Activated naive CD4-positive, alpha-beta T cell treated with anti-CD3 and anti-CD28 coated beads for 36 hours (primary cell): ENCODE measurements at regions of chr2 and their contacts with region 1.

Region 1: DNA sequence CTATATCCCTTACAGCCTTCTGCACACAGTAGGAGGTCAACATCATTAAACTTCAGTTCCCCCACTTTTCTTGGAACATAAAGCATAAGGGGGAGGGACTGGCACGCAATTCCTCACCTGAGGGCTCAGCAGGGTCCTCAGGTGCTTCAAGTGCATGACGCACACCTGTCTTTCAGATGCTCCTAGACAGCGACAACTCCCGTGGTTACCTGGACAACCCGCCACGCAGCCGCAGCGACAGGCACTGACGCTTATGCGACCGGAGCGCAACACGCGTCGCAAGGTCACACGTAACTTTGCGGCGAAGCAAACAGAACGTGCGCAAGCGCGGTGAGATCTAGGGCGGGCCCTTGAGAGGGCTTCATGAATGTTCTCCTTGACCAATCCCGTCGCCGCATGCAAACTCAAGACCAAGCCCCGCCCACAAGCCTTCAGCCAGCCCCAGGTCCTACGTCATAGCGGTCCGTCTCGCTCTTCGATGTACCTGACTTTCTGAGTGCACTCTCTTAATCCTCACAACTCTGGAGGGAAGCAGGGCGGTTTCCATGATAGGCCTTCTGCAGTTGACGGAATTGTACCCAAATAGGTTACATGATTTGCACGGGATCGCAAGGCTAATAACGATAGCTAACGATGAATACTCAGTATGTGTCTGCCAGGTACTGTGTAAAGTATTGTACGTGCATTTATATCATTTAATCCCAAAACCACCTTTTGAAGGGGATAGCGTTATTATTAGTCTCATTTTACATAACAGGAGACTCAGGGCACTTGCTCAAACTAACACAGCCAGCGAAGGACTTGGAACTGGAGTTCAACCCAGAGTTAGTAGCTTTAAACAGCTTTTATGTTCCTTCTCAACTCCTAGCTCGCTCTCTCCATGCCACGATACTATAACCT is at the start of gene IFT172:
- DNase-seq: peak; percentile 100
- H3K4me3 Mint-ChIP-seq: peak within 1 kb of the TSS; percentile 87
- H3K27ac Mint-ChIP-seq: peak within 1 kb of the TSS; percentile 66
- H3K4me1 Mint-ChIP-seq: peaks cover 20% of the 10 kb centered on the region
- H3K27me3 Mint-ChIP-seq: peaks cover 10% of the 10 kb centered on the region
- total RNA-seq, gene IFT172: 9.2 to 12.7 TPM

Region 2: DNA sequence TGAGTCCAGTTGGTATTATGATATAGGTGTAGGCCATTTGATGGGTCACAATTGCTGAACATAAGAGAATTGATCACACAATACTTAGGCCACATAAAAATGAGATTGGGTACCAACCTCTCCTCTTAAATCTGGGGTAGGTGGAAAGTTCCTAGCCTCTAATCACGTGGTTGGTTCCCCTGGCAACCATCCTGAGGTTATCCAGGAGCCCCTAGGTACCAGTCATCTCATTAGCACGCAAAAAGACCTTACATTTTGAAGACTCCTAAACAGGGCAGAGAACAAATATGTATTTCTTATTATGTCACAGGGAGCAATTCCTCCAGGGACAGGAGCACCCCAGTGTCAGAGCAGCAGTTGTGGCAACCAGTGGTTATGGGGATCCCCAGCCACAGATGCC is 1156.5 kb before region 1 on chr2:
- CTCF ChIA-PET with region 1: no interaction called
- intact Hi-C with region 1: no loop called
- DNase-seq: no peak
- H3K4me3 Mint-ChIP-seq: no peak overlapping the region
- H3K27ac Mint-ChIP-seq: no peak overlapping the region
- H3K4me1 Mint-ChIP-seq: peaks cover 11% of the 10 kb centered on the region
- H3K27me3 Mint-ChIP-seq: no peaks in the 10 kb centered on the region

Region 3: DNA sequence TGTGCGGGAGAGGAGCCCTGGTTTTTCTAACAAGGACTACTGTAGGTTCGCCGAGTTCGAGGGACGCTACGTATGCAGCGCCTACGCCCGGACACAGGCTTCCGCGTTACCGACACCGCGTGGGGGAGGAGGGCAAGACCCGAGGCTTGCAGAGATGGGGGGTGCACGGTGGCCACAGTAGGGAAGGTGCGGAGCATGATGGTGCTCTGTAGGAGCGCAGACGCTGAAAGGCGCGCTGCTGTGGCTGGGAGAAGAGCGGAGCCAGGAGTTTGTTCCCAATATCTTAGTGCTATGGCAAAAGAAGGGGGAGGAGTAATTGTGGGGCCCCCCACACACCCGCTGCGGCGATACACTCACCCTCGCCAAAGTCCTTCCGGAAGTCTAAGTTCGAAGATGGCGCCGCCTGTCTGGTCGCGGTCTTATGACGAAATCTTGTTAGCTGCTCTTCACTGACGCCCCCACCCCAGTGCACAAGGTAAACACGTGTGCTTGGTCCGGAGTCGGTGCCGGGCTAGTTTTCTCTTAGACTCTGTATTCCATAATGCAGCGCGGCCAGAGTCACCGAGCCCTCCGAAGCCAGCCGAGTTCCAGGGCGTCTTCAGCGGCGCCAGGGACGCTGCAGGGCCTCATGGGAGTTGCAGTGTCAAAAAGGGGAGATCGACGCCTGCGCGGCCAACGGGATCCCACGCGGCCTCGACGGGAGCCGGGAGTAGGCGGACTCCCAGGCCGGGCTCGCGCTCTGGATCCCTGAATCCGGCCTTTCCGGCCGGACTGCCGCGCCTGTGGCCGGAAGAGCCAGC is 133.2 kb before region 1 on chr2 and contains the start of gene GTF3C2:
- CTCF ChIA-PET with region 1: no interaction called
- intact Hi-C with region 1: loop called (anchors 1 kb)
- DNase-seq: peak; percentile 94
- H3K4me3 Mint-ChIP-seq: peak within 1 kb of the TSS; percentile 99
- H3K27ac Mint-ChIP-seq: peak within 1 kb of the TSS; percentile 99
- H3K4me1 Mint-ChIP-seq: peaks cover 59% of the 10 kb centered on the region
- H3K27me3 Mint-ChIP-seq: no peaks in the 10 kb centered on the region
- total RNA-seq, gene GTF3C2: 62.9 to 72.3 TPM

Region 4: GRCh38 chr2:27409321-27410073 is 80.3 kb before region 1 on chr2 and contains the start of gene PPM1G:
- CTCF ChIA-PET with region 1: interaction called, 4 read pairs
- intact Hi-C with region 1: loop called (anchors 1 kb)
- DNase-seq: peak; percentile 97
- H3K4me3 Mint-ChIP-seq: peak within 1 kb of the TSS; percentile 89
- H3K27ac Mint-ChIP-seq: peak within 1 kb of the TSS; percentile 87
- H3K4me1 Mint-ChIP-seq: peaks cover 32% of the 10 kb centered on the region
- H3K27me3 Mint-ChIP-seq: no peaks in the 10 kb centered on the region
- total RNA-seq, gene PPM1G: 92.3 to 101 TPM

Region 5: GRCh38 chr2:27628767-27629709 is 139.3 kb after region 1 on chr2 and contains the starts of genes CCDC121 and GPN1:
- CTCF ChIA-PET with region 1: no interaction called
- intact Hi-C with region 1: loop called (anchors 1 kb)
- DNase-seq: peak; percentile 98
- H3K4me3 Mint-ChIP-seq: no peak within 1 kb of the TSS
- H3K27ac Mint-ChIP-seq: peak within 1 kb of the TSS; percentile 52
- H3K4me1 Mint-ChIP-seq: peaks cover 13% of the 10 kb centered on the region
- H3K27me3 Mint-ChIP-seq: no peaks in the 10 kb centered on the region
- total RNA-seq, gene CCDC121: 0.17 to 0.30 TPM
- total RNA-seq, gene GPN1: 44.9 to 45.1 TPM

Region 6: GRCh38 chr2:27663463-27664249 is 173.9 kb after region 1 on chr2 and contains the starts of genes SLC4A1AP and SUPT7L:
- CTCF ChIA-PET with region 1: no interaction called
- intact Hi-C with region 1: loop called (anchors 1 kb)
- DNase-seq: peak; percentile 76
- H3K4me3 Mint-ChIP-seq: peak within 1 kb of the TSS; percentile 98
- H3K27ac Mint-ChIP-seq: peak within 1 kb of the TSS; percentile 99
- H3K4me1 Mint-ChIP-seq: peaks cover 47% of the 10 kb centered on the region
- H3K27me3 Mint-ChIP-seq: no peaks in the 10 kb centered on the region
- total RNA-seq, gene SLC4A1AP: 21.2 to 22.2 TPM
- total RNA-seq, gene SUPT7L: 27.8 to 29.7 TPM